ENCODE measurements at regions of chr9 and their contacts with region 1.

Region 1: DNA sequence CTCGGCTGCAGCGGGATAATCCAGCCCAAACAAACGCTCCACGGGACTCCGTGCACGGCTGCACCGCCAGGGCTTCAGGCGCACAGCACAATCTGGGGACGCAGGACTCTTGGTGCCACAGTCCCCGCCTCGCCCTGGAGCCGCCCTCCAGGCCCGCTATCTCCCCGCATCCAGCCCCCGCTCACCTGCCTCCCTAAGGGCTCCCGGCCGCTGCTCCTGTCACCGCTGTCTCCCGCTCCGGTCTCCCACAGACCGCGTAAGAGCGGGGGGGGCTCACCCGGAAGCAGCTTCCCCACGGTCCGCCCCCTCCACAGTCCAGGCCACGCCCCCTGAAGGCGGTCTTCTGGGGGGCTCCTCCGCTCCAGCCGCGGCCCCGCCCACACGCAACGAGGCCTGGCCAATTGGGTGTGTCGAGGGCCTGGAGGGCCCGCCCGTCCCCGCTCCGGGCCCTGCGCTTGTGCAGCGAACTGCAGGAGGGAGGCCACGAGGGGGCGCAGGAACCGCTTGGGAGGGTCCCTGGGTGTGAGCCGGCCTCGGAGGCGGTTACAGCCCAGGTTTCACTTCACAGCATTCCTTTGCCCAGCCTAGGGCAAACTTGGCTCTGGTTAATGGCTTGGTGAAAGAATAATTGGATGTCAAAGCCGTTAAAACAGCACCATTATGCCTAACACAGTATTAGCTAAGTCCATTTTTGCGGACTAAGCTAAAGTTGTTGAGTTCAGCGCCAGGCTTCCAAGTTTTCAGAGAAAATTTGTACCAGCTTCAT is at the start of gene ALAD:
- DNase-seq: peak; percentile 97
- ATAC-seq: peak; percentile 94
- H3K4me3 ChIP-seq: peak within 1 kb of the TSS; percentile 94
- H3K27ac ChIP-seq: no peak within 1 kb of the TSS
- H3K4me1 ChIP-seq: peaks cover 21% of the 10 kb centered on the region
- H3K27me3 ChIP-seq: no peaks in the 10 kb centered on the region
- CTCF ChIP-seq: peak; percentile 83
- total RNA-seq, gene ALAD: 6.6 and 7.9 TPM in 2 replicates

Region 2: GRCh38 chr9:113275157-113276131 is 125.8 kb before region 1 on chr9 and contains the starts of genes CDC26 and PRPF4:
- CTCF ChIA-PET with region 1: interaction called, 3 read pairs
- POLR2A ChIA-PET with region 1: no interaction called
- intact Hi-C with region 1: loop called (anchors 1 kb)
- DNase-seq: peak; percentile 92
- ATAC-seq: peak; percentile 93
- H3K4me3 ChIP-seq: peak within 1 kb of the TSS; percentile 94
- H3K27ac ChIP-seq: peak within 1 kb of the TSS; percentile 72
- H3K4me1 ChIP-seq: peaks cover 9% of the 10 kb centered on the region
- H3K27me3 ChIP-seq: no peaks in the 10 kb centered on the region
- CTCF ChIP-seq: no peak
- total RNA-seq, gene CDC26: 32.4 and 34.7 TPM in 2 replicates
- total RNA-seq, gene PRPF4: 27.4 and 32.1 TPM in 2 replicates

Region 3: DNA sequence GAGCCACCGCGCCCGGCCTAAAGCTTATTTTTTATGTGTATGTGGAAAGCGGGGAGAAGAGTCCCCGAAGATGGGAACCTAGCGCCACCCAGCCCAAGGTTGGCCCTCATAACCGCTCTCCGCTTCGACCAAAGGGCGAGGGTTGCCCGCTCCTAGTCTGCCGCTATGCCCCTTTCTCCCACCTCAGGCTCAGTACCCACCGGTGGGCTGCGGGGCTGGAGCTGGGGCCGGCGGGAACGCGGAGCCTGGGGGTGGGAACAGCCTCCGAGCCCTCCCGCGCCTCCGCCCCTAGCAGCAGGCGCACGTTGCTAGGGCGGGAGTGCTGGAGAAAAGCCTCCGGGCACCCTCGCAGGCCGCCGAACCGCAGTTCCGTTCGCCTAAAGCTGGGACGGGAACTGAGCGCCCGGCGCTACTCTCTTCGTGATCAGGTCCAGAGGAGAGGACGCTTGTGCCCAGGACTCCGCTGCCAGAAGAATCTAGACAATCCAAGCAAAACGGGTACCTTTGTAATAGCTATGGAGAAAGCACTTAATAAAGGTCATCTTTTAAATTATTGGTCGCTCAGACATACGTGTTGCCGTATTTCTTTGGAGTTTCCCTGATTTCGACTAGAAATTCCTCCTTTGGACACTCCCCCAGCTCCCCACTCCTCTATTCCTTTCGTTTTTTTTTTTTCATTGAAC is 61.1 kb before region 1 on chr9 and contains the start of gene WDR31:
- CTCF ChIA-PET with region 1: no interaction called
- POLR2A ChIA-PET with region 1: no interaction called
- intact Hi-C with region 1: loop called (anchors 2 kb)
- DNase-seq: peak; percentile 79
- ATAC-seq: peak; percentile 87
- H3K4me3 ChIP-seq: peak within 1 kb of the TSS; percentile 91
- H3K27ac ChIP-seq: peak within 1 kb of the TSS; percentile 63
- H3K4me1 ChIP-seq: peaks cover 25% of the 10 kb centered on the region
- H3K27me3 ChIP-seq: no peaks in the 10 kb centered on the region
- CTCF ChIP-seq: no peak
- total RNA-seq, gene WDR31: 1.7 TPM in 2 replicates

Region 4: DNA sequence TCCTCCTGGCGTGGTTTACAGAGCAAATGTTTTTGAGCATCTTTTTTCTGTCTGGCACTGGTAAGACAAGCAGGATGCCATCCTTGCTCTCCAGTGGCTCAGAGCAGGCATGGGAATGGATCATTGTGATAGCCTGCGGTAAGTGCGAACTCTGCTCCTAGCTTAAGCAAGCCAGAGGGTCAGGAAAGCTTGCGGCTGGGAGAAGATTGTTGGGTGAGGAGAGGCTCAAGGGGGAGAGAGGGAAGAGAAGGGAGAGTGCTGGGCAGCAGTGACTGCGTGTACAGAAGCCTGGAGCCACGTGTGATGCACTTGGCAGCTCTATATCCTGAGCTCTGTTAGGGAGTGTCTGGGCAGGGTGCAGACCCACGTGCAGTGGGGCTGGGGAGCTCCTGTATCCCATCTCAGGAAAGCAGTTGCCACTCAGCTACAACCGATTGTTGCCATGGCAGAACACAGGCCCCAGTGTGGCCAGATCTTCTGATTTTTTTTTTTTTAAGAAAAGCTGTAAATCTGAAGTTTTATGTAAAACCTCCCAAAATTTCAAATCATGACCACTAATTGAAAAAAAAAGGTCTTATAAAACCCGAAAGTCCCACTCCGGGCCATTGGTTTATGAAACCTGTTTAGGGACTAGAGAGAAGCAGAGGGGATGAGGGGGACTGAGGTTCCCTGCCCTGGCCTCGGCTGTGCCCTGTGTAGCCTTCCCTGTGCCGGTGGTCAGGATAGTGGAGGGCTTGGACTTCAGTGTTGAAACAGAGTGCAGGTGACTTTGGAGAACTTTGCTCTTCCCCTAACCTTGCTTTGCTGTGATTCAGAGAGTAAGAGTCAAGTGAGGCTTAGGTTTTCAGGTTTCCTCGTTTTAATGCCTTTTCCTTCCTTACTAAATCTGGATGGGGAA is 542.2 kb after region 1 on chr9:
- CTCF ChIA-PET with region 1: interaction called, 12 read pairs
- POLR2A ChIA-PET with region 1: no interaction called
- intact Hi-C with region 1: no loop called
- DNase-seq: no peak
- ATAC-seq: no peak
- H3K4me3 ChIP-seq: no peak overlapping the region
- H3K27ac ChIP-seq: no peak overlapping the region
- H3K4me1 ChIP-seq: peaks cover 10% of the 10 kb centered on the region
- H3K27me3 ChIP-seq: no peaks in the 10 kb centered on the region
- CTCF ChIP-seq: no peak